ENCODE measurements at regions of chr9 and their contacts with region 1.

Region 1: GRCh38 chr9:137650259-137650658 is 31.5 kb downstream of the EHMT1 start:
- DNase-seq: no peak
- H3K4me3 ChIP-seq: no peak overlapping the region
- H3K27ac ChIP-seq: no peak overlapping the region
- H3K4me1 ChIP-seq: no peaks in the 10 kb centered on the region
- H3K27me3 ChIP-seq: no peaks in the 10 kb centered on the region
- CTCF ChIP-seq: no peak
- POLR2A ChIP-seq: no peak

Region 2: GRCh38 chr9:136363606-136364370 is 1286.5 kb before region 1 on chr9 and contains the start of gene DNLZ:
- intact Hi-C with region 1: loop called (anchors 5 kb)
- DNase-seq: peak; percentile 77 to 81
- H3K4me3 ChIP-seq: peak within 1 kb of the TSS; percentile 80 to 94 (median 83)
- H3K27ac ChIP-seq: peak within 1 kb of the TSS; percentile 80 to 97
- H3K4me1 ChIP-seq: peaks cover 3 to 7% of the 10 kb centered on the region in 2 donors
- H3K27me3 ChIP-seq: no peaks in the 10 kb centered on the region
- CTCF ChIP-seq: peak; percentile 79 to 99 (median 87)
- POLR2A ChIP-seq: no peak
- total RNA-seq, gene DNLZ: 35.4 to 57.4 (median 40.0) TPM

Region 3: DNA sequence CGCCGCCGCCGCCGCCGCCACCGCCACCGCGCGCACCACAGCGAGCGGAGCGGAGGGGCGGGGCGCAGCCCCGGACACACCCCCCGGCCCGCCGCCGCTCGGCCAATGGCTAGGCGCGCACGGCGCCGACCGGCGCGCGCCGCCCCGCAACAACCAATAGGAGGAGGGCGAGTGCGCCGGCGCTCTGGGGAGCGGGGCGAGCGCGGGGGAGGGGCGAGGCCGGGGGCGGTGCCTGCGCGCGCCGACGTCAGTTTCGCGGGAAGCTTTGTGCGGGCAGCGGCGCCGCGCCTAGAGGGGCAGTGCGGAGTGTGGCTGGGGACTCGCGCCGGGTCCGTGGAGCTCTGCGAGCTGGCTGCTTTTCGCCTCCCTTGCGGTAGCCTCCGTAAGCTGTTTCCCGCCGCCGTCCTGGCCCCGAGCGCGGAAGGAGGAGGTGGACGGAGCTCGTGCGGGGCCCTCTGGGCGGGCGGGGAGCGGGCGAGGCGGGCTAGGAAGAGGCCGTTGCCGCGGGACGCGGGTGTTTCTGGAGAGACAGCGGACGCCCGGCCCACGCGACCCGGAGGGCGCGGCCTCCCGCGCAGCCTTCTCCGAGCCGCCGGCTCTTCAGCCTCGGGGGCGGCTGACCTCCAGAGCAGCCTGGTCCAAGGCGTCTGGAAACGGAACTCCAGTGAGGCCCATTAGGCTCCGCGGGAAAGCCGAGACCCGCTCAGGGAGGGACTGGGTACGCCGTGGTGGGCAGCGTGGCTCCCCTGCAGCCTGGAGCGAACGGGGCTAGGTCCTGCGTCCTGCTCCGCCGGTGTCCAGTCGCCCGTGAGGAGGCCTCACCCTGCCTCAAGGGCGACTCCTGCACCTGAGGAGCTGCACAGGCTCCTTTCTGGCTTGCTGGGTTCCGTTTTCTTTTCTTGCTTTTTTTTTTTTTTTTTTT is 59.5 kb before region 1 on chr9 and contains the start of gene ZMYND19:
- intact Hi-C with region 1: no loop called
- DNase-seq: peak; percentile 84 to 87
- H3K4me3 ChIP-seq: peak within 1 kb of the TSS; percentile 62 to 94 (median 74)
- H3K27ac ChIP-seq: peak within 1 kb of the TSS; percentile 50 to 83
- H3K4me1 ChIP-seq: peaks cover 6 to 8% of the 10 kb centered on the region in 2 donors
- H3K27me3 ChIP-seq: no peaks in the 10 kb centered on the region
- CTCF ChIP-seq: no peak
- POLR2A ChIP-seq: no peak
- total RNA-seq, gene ZMYND19: 9.4 to 17.7 (median 16.5) TPM

Region 4: DNA sequence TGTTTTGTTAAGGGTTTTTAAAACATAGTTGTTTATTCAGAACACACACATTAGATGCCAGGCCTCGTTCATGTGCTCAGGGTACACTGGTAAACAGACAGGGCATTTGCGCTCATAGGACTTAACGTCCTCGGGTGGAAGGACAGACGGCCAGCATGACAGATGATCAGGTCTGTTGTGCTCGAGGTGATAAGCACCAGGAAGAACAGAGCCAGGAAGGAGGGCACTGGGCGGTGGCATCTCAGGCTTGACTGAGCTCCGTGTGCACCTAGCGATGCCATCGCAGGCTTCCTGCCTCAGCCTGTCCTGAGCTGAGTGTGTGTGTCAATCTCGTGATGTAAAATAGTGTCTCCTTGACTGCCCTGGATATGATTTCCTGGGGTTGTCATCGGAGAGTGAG is 65.1 kb after region 1 on chr9:
- intact Hi-C with region 1: no loop called
- DNase-seq: no peak
- H3K4me3 ChIP-seq: no peak overlapping the region
- H3K27ac ChIP-seq: no peak overlapping the region
- H3K4me1 ChIP-seq: no peaks in the 10 kb centered on the region
- H3K27me3 ChIP-seq: no peaks in the 10 kb centered on the region
- CTCF ChIP-seq: no peak
- POLR2A ChIP-seq: no peak

Measured in breast epithelium (tissue), 4 donors.